Dorsolateral prefrontal cortex (tissue), 120 donors: ENCODE measurements at regions of chr14 and their contacts with region 1.

Region 1: GRCh38 chr14:75709207-75709812 is 48.3 kb downstream of the TTLL5 start:
- DNase-seq: peak; percentile 41 to 93 (median 79)
- H3K4me3 ChIP-seq: no peak overlapping the region
- H3K27ac ChIP-seq: peak overlapping the region in 20 of 59 donors; percentile 1 to 98 (median 22)
- H3K27me3 ChIP-seq: no peaks in the 10 kb centered on the region
- CTCF ChIP-seq: peak; percentile 65 to 95 (median 87)

Region 2: GRCh38 chr14:75794615-75795038 is 85.3 kb after region 1 on chr14:
- intact Hi-C with region 1: loop called in 1 of 2 experiments (anchors 2 kb)
- DNase-seq: no peak
- H3K4me3 ChIP-seq: no peak overlapping the region
- H3K27ac ChIP-seq: peak overlapping the region in 19 of 59 donors; percentile 5 to 65 (median 39)
- H3K27me3 ChIP-seq: no peaks in the 10 kb centered on the region
- CTCF ChIP-seq: peak in 53 of 56 donors; percentile 12 to 77 (median 50)

Region 3: GRCh38 chr14:75906676-75907280 is 197.5 kb after region 1 on chr14:
- intact Hi-C with region 1: loop called (anchors 5 to 10 kb)
- DNase-seq: peak in 5 of 10 donors; percentile 56 to 84 (median 63)
- H3K4me3 ChIP-seq: peak overlapping the region in 1 of 59 donors; percentile 35
- H3K27ac ChIP-seq: peak overlapping the region in 42 of 59 donors; percentile 1 to 78 (median 44)
- H3K27me3 ChIP-seq: no peaks in the 10 kb centered on the region
- CTCF ChIP-seq: peak; percentile 84 to 99 (median 94)

Region 4: GRCh38 chr14:76090616-76091391 is 381.5 kb after region 1 on chr14:
- intact Hi-C with region 1: loop called in 1 of 2 experiments (anchors 10 kb)
- DNase-seq: peak in 5 of 10 donors; percentile 27 to 63 (median 52)
- H3K4me3 ChIP-seq: no peak overlapping the region
- H3K27ac ChIP-seq: no peak overlapping the region
- H3K27me3 ChIP-seq: no peaks in the 10 kb centered on the region
- CTCF ChIP-seq: peak in 46 of 56 donors; percentile 15 to 66 (median 45)

Region 5: GRCh38 chr14:76386915-76387782 is 677.8 kb after region 1 on chr14:
- intact Hi-C with region 1: loop called in 1 of 2 experiments (anchors 10 kb)
- DNase-seq: peak; percentile 43 to 84 (median 70)
- H3K4me3 ChIP-seq: no peak overlapping the region
- H3K27ac ChIP-seq: no peak overlapping the region
- H3K27me3 ChIP-seq: peaks cover 0 to 45% (median 8%) of the 10 kb centered on the region in 45 donors
- CTCF ChIP-seq: peak; percentile 55 to 99 (median 94)